Ascending aorta (tissue), 2 donors: ENCODE measurements at regions of chr7 and their contacts with region 1.

Region 1: DNA sequence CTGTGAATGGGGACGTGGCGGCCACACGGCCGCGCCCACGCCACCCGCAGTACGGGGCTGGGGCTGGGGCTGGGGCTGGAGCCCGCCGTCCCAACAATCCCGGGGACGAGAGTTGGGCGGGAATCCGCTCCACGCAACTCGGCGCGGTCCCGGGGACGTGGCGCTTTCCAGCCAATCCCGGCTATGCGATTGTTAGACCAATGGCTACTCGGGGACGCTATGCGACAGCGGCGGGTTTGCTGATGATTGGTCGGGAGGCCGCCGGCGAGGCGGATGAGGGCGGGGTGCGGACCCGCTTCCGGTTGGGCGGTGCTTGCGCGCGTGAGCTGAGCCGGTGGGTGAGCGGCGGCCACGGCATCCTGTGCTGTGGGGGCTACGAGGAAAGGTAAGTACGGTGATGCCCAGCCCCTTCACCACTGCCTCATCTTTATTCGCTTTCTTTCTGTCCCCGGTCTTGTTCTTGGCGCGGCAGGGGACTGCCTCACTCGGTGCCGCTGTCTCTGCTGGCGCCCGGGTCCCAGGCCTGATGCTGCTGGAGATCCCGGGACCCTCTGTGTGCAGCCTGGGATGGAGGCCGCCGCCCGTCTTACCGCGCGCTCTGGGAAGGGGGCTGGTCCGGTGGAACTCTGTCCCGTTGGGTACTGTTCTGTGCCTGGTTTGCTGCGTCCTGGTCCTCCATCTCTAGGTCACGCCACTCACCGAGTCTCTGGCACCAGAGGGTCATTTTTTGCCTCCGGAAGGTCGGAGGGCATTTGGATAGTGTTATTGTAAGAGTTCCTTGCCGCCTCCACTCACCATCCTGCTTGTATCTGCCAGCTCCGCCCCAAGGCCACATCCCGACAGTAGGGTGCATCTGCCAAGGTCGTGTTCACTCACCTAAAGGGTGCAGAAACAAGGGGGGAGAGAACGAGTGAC is at the start of gene CALU:
- DNase-seq: peak; percentile 95 to 99
- H3K4me3 ChIP-seq: peak within 1 kb of the TSS; percentile 83 to 93
- H3K27ac ChIP-seq: peak within 1 kb of the TSS; percentile 98
- H3K4me1 ChIP-seq: peaks cover 0 to 27% of the 10 kb centered on the region in 2 donors
- H3K27me3 ChIP-seq: no peaks in the 10 kb centered on the region
- CTCF ChIP-seq: no peak
- total RNA-seq, gene CALU: 82.8 TPM

Region 2: DNA sequence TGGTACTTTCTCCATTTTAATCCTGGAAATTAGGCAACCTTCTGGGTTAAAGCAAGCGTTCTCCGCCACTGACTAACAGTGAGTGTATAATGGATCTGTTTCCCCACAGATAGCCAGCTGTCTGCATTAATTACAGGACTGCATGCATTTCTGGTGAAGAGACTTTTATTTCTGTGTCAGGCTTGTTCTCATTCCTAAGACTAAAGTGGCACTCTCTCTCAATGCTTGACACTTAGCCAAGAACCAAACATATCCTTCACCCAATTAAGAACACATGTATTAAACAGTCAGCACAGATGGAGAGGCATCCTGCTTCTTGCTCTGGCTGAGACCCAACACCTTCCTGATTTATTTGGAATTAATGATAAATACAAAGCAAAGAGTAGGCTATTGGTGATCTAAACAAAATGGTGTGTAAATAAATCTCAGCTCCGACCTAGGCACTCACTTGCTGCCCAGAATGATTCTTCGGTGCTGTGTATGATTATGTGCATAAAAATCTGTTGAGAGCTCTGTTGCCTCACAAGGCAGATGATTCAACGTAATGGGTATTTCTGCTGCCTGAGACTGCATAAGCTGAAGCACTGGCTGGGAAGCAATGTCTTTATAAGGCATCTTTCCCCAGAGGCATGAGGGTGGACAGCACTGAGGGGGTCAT is 16.6 kb after region 1 on chr7:
- intact Hi-C with region 1: loop called (anchors 2 kb)
- DNase-seq: peak in 1 of 2 donors; percentile 77
- H3K4me3 ChIP-seq: no peak overlapping the region
- H3K27ac ChIP-seq: peak overlapping the region; percentile 39 to 64
- H3K4me1 ChIP-seq: peaks cover 6 to 15% of the 10 kb centered on the region in 2 donors
- H3K27me3 ChIP-seq: no peaks in the 10 kb centered on the region
- CTCF ChIP-seq: no peak

Region 3: GRCh38 chr7:128777156-128778123 is 38.1 kb after region 1 on chr7:
- intact Hi-C with region 1: loop called (anchors 2 kb)
- DNase-seq: no peak
- H3K4me3 ChIP-seq: no peak overlapping the region
- H3K27ac ChIP-seq: peak overlapping the region; percentile 31 to 58
- H3K4me1 ChIP-seq: peaks cover 0 to 8% of the 10 kb centered on the region in 2 donors
- H3K27me3 ChIP-seq: no peaks in the 10 kb centered on the region
- CTCF ChIP-seq: no peak

Region 4: DNA sequence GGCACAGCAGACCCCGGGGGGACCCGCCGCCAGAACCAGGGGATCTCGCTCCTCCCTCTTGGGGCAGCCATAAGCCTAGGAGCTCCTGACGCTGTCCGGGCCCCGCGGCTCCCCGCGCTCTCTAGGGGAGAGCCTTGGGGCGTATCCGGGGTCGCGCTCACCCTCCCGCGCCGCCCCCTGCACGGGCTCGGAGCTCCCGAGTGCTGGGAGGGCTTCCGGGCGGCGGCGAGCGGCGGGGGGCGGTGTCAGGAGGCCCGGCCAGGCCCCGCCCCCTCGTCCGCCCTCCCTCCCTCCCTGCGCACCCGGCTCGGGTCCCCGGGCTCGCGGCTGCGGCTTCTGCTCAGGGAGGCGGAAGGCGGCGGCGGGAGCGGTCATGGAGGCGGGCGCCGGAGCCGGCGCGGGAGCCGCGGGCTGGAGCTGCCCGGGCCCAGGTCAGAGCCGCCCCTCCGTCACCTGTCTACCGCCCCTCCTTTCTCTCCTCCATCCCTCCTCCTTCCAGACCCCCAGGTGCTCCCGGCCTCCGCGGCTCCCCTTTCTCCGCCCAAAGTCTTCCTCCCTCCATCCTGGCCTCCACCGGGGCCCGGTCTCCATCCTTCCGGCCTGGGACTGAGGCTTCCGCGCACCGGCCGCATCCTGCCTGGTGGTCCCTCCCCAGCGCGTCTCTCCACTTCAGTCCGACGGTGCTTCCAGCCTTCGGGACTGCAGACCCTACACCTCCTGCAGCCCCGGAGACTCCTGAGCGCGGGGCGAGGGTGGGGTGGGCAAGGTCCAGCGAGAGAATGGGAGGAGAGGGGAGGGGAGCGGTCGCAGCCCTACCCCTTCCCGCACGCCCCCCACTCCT is 52.0 kb after region 1 on chr7:
- intact Hi-C with region 1: loop called (anchors 1 kb)
- DNase-seq: peak; percentile 17 to 86
- H3K4me3 ChIP-seq: peak overlapping the region; percentile 74 to 89
- H3K27ac ChIP-seq: peak overlapping the region; percentile 55 to 78
- H3K4me1 ChIP-seq: peaks cover 7 to 12% of the 10 kb centered on the region in 2 donors
- H3K27me3 ChIP-seq: no peaks in the 10 kb centered on the region
- CTCF ChIP-seq: no peak

Region 5: DNA sequence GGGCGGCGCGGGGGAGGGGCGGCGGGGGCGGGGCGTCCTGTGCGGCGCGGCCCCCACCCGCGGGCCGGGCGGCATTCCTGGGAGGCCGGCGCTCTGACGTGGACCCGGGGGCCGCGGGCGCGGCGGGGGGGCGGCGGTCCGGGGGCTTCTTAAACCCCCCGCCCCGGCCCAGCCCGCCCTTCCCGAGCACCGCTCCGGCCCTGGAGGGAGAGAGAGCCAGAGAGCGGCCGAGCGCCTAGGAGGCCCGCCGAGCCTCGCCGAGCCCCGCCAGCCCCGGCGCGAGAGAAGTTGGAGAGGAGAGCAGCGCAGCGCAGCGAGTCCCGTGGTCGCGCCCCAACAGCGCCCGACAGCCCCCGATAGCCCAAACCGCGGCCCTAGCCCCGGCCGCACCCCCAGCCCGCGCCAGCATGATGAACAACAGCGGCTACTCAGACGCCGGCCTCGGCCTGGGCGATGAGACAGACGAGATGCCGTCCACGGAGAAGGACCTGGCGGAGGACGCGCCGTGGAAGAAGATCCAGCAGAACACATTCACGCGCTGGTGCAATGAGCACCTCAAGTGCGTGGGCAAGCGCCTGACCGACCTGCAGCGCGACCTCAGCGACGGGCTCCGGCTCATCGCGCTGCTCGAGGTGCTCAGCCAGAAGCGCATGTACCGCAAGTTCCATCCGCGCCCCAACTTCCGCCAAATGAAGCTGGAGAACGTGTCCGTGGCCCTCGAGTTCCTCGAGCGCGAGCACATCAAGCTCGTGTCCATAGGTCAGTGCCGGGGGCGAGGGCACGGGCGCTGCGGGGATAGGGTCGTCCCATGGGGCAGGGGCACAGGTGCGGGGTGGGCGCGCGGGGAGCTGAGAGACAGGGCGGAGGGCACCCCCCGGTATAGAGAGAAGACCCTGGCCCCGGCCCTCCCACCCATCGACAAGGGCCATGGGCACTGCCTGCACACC is 91.2 kb after region 1 on chr7 and contains the start of gene FLNC:
- intact Hi-C with region 1: loop called (anchors 1 kb)
- DNase-seq: peak in 1 of 2 donors; percentile 82
- H3K4me3 ChIP-seq: peak within 1 kb of the TSS; percentile 71 to 88
- H3K27ac ChIP-seq: peak within 1 kb of the TSS; percentile 92 to 95
- H3K4me1 ChIP-seq: peaks cover 11 to 37% of the 10 kb centered on the region in 2 donors
- H3K27me3 ChIP-seq: no peaks in the 10 kb centered on the region
- CTCF ChIP-seq: no peak
- total RNA-seq, gene FLNC: 117 TPM

Region 6: GRCh38 chr7:128862571-128863432 is 123.5 kb after region 1 on chr7 and contains the start of gene ATP6V1F:
- intact Hi-C with region 1: loop called (anchors 2 kb)
- DNase-seq: peak; percentile 94 to 99
- H3K4me3 ChIP-seq: peak within 1 kb of the TSS; percentile 73 to 79
- H3K27ac ChIP-seq: peak within 1 kb of the TSS; percentile 60 to 63
- H3K4me1 ChIP-seq: peaks cover 12 to 38% of the 10 kb centered on the region in 2 donors
- H3K27me3 ChIP-seq: no peaks in the 10 kb centered on the region
- CTCF ChIP-seq: no peak
- total RNA-seq, gene ATP6V1F: 142 TPM

Region 7: GRCh38 chr7:128883622-128884501 is 144.6 kb after region 1 on chr7:
- intact Hi-C with region 1: loop called (anchors 5 kb)
- DNase-seq: peak; percentile 39 to 89
- H3K4me3 ChIP-seq: no peak overlapping the region
- H3K27ac ChIP-seq: no peak overlapping the region
- H3K4me1 ChIP-seq: no peaks in the 10 kb centered on the region
- H3K27me3 ChIP-seq: no peaks in the 10 kb centered on the region
- CTCF ChIP-seq: peak; percentile 87 to 97 (median 93)